Common myeloid progenitor, CD34-positive (primary cell): ENCODE measurements at regions of chr11 and their contacts with region 1.

Region 1: GRCh38 chr11:9214765-9215164 is 50.4 kb downstream of the DENND5A start:
- DNase-seq: no peak
- H3K4me3 ChIP-seq: no peak overlapping the region
- H3K27ac ChIP-seq: no peak overlapping the region
- H3K4me1 ChIP-seq: peaks cover 8 to 25% (median 17%) of the 10 kb centered on the region in 4 experiments
- H3K27me3 ChIP-seq: no peaks in the 10 kb centered on the region

Region 2: DNA sequence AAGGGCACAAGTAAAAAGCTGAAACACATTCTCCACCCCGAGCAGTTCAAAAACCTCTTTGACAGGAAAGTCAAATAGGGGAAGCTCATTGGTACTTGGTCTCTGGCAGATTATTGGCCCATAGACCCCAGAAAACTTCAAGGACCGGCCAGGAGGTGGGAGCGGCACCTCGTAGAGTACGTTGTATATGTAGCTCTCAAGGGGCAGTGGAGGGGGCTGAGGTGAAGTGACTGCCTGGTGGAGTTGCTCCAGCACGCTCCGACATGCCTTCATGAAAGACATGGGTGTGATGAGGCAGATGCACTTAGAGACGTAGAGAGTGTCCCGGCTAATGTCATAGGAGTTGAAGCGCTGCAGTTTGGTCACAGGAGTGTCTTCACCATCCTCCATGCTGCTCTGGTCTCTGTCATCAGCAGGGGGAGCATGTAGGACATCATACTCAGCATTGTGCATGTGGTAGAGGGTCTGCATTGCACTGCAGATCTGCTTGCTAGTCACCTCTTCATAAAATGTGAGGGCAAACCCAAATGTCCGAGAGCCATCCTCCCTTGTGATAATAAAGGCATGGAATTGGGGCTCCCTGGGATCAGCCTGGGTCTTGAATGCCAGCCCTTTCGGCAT is 11.0 kb before region 1 on chr11:
- CTCF ChIA-PET with region 1: interaction called, 15 read pairs
- POLR2A ChIA-PET with region 1: no interaction called
- DNase-seq: peak; percentile 45 to 70 (median 64)
- H3K4me3 ChIP-seq: no peak overlapping the region
- H3K27ac ChIP-seq: no peak overlapping the region
- H3K4me1 ChIP-seq: peaks cover 0 to 3% (median under 1%) of the 10 kb centered on the region in 4 experiments
- H3K27me3 ChIP-seq: no peaks in the 10 kb centered on the region